ENCODE measurements at regions of chr6 and their contacts with region 1.

Region 1: DNA sequence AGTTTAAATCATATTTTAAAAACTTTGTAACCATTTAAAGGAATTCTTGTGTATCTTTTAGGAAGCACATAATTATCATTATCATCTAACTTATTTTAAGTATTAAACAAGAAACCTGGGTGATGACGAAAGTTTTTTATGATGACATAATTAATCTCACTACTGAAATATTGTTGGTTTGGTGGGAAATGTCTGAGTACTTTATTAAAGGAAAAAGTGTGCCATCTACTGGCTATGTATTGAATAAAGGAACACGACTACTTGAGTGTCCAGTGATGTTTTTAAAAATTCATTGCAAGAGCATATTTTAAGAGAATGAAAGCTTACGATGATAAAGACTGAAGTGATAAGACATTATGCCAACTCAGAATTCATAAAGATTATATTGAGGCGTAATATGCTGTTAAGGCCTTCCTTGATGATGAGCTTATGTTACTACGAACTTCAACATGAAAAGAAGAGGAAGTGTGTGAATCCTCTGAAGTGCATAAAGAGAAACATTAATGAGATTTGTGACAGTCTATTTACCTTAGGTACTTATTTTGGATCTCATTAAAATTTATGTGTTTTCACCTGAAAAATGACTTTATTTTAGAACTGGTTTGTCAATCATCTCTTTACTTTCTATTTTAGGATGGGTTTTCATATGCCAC is 12.0 kb upstream of the TRMT11 start:
- DNase-seq: peak; percentile 61
- ATAC-seq: no peak; the same call in 1 of the 2 replicates
- H3K4me3 ChIP-seq: no peak overlapping the region
- H3K27ac ChIP-seq: no peak overlapping the region
- H3K4me1 ChIP-seq: peaks cover 12% of the 10 kb centered on the region
- H3K27me3 ChIP-seq: no peaks in the 10 kb centered on the region
- CTCF ChIP-seq: peak; percentile 75

Region 2: GRCh38 chr6:125314019-125314581 is 660.2 kb before region 1 on chr6:
- CTCF ChIA-PET with region 1: no interaction called
- POLR2A ChIA-PET with region 1: no interaction called
- intact Hi-C with region 1: loop called (anchors 5 kb)
- DNase-seq: peak; percentile 62
- ATAC-seq: peak; percentile 88
- H3K4me3 ChIP-seq: no peak overlapping the region
- H3K27ac ChIP-seq: no peak overlapping the region
- H3K4me1 ChIP-seq: no peaks in the 10 kb centered on the region
- H3K27me3 ChIP-seq: peaks cover 18% of the 10 kb centered on the region
- CTCF ChIP-seq: peak; percentile 81

Region 3: GRCh38 chr6:125732398-125732797 is 241.9 kb before region 1 on chr6:
- CTCF ChIA-PET with region 1: no interaction called
- POLR2A ChIA-PET with region 1: no interaction called
- intact Hi-C with region 1: no loop called
- DNase-seq: no peak
- ATAC-seq: no peak
- H3K4me3 ChIP-seq: no peak overlapping the region
- H3K27ac ChIP-seq: no peak overlapping the region
- H3K4me1 ChIP-seq: no peaks in the 10 kb centered on the region
- H3K27me3 ChIP-seq: peaks cover 59% of the 10 kb centered on the region
- CTCF ChIP-seq: no peak

Region 4: DNA sequence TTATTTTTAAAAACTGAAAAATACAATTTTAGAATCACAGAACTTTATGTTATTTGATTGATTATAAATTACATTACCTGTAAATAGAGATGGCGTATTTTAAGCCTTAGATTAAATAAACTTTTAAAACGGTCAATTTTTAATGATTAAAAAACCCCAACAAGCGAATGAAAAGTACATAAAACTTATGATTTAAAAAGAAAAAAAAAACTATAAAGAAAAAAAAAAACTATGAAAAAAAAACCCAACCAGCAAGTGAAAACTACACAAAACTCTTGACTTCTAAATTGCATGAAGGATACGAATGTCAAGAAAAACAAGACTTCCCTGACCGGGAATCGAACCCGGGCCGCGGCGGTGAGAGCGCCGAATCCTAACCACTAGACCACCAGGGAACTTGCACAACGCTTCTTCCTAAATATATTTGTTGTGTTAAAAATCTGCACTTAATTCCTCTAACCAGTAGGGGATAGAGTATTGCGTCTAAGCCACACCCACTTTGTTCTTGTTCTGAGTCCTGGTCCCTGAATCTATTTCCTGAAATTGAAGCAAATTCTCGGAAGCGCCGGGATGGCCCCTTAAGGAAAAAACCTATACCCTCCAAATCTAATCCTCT is 194.3 kb before region 1 on chr6:
- CTCF ChIA-PET with region 1: interaction called, 4 read pairs
- POLR2A ChIA-PET with region 1: no interaction called
- intact Hi-C with region 1: loop called (anchors 5 kb)
- DNase-seq: peak; percentile 94
- ATAC-seq: peak; percentile 68
- H3K4me3 ChIP-seq: peak overlapping the region; percentile 94
- H3K27ac ChIP-seq: peak overlapping the region; percentile 54
- H3K4me1 ChIP-seq: peaks cover 15% of the 10 kb centered on the region
- H3K27me3 ChIP-seq: peaks cover 4% of the 10 kb centered on the region; the same call in 1 of the 2 replicates
- CTCF ChIP-seq: no peak

Region 5: GRCh38 chr6:125858427-125859320 is 115.7 kb before region 1 on chr6:
- CTCF ChIA-PET with region 1: no interaction called
- POLR2A ChIA-PET with region 1: no interaction called
- intact Hi-C with region 1: loop called (anchors 1 kb)
- DNase-seq: peak; percentile 85
- ATAC-seq: peak; percentile 99
- H3K4me3 ChIP-seq: no peak overlapping the region
- H3K27ac ChIP-seq: no peak overlapping the region
- H3K4me1 ChIP-seq: no peaks in the 10 kb centered on the region
- H3K27me3 ChIP-seq: no peaks in the 10 kb centered on the region
- CTCF ChIP-seq: peak; percentile 89

Region 6: GRCh38 chr6:126040826-126041225 is 66.5 kb after region 1 on chr6:
- CTCF ChIA-PET with region 1: no interaction called
- POLR2A ChIA-PET with region 1: no interaction called
- intact Hi-C with region 1: no loop called
- DNase-seq: peak; percentile 75
- ATAC-seq: peak; percentile 95
- H3K4me3 ChIP-seq: peak overlapping the region; percentile 10; the same call in 1 of the 2 replicates
- H3K27ac ChIP-seq: peak overlapping the region; percentile 81
- H3K4me1 ChIP-seq: peaks cover 45% of the 10 kb centered on the region
- H3K27me3 ChIP-seq: no peaks in the 10 kb centered on the region
- CTCF ChIP-seq: no peak

Region 7: DNA sequence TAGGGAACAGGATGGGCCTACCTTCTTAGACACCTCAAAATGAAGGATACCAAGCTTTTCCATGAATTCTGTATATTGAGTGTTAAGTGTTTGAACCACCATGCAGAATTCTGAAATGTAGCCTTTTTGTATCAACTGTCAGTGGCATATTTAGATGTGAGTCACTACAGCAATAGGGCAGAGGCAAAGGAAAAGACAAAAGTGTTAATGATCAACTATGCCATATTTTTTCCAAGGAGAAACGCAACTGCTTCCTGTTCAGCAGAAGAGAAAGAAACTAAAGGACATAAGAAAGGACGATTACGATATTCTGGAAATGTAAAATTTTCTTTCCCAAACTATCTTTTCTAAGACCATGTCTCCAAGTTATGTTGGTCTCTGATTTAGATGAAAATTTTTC is 1039.5 kb after region 1 on chr6:
- CTCF ChIA-PET with region 1: no interaction called
- POLR2A ChIA-PET with region 1: no interaction called
- intact Hi-C with region 1: no loop called
- DNase-seq: no peak
- ATAC-seq: no peak
- H3K4me3 ChIP-seq: no peak overlapping the region
- H3K27ac ChIP-seq: no peak overlapping the region
- H3K4me1 ChIP-seq: no peaks in the 10 kb centered on the region
- H3K27me3 ChIP-seq: no peaks in the 10 kb centered on the region
- CTCF ChIP-seq: no peak

Measured in PC-3 (cell line).